Breast epithelium (tissue), 4 donors: ENCODE measurements at regions of chr9 and their contacts with region 1.

Region 1: GRCh38 chr9:129430940-129431643 is 189.8 kb downstream of the C9orf50 start:
- DNase-seq: no peak
- H3K4me3 ChIP-seq: no peak overlapping the region
- H3K27ac ChIP-seq: no peak overlapping the region
- H3K4me1 ChIP-seq: no peaks in the 10 kb centered on the region
- H3K27me3 ChIP-seq: no peaks in the 10 kb centered on the region
- CTCF ChIP-seq: no peak
- POLR2A ChIP-seq: no peak

Region 2: GRCh38 chr9:128540634-128541360 is 890.3 kb before region 1 on chr9:
- intact Hi-C with region 1: no loop called
- DNase-seq: no peak
- H3K4me3 ChIP-seq: no peak overlapping the region
- H3K27ac ChIP-seq: no peak overlapping the region
- H3K4me1 ChIP-seq: no peaks in the 10 kb centered on the region
- H3K27me3 ChIP-seq: no peaks in the 10 kb centered on the region
- CTCF ChIP-seq: no peak
- POLR2A ChIP-seq: no peak

Region 3: GRCh38 chr9:129467004-129467588 is 36.0 kb after region 1 on chr9:
- intact Hi-C with region 1: loop called (anchors 1 kb)
- DNase-seq: no peak
- H3K4me3 ChIP-seq: no peak overlapping the region
- H3K27ac ChIP-seq: peak overlapping the region in 1 of 2 donors; percentile 64
- H3K4me1 ChIP-seq: peaks cover 13 to 21% of the 10 kb centered on the region in 2 donors
- H3K27me3 ChIP-seq: no peaks in the 10 kb centered on the region
- CTCF ChIP-seq: no peak
- POLR2A ChIP-seq: no peak